Mammary epithelial cell (primary cell): ENCODE measurements at regions of chr7 and their contacts with region 1.

Region 1: DNA sequence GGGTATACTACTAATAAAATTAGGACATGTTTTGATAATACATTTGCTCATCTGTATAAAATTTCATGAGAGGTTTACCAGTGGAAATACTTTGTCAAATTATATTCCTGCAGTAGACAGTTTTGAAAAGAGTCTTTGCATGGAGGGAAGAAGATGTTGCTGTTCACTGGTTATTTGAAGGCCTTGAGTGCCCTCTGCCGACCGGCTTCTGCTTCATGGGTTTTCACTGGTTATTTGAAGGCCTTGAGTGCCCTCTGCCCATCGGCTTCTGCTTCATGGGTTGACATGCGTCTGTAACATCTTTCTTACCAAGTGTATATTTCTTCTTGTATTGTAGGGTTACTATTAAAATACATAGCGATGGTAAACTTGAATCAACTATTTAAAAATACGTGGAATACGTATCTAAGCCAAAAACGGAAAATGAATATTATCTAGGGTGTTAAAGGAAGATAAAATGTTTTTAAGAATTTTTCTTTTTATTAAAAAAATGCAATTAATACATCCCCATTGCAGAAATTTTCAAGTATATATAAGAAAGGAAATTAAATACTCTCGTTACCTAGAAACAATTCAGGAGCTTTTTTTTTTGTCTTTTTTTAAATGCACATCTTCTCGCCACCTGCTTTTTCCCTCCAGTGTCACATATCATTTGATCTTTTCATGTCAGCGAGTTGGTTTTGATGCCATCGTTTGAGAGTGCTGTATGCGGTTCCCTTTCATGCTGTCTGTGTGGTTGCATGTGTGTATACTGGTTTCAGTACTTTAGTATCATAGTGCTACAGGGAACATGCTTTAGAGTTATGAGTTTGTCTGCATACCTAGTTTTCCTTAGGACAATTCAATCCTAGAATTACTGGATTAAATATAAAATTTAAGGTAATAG is 73.4 kb downstream of the SHH start:
- DNase-seq: peak; percentile 60
- H3K4me3 ChIP-seq: no peak overlapping the region
- H3K27ac ChIP-seq: no peak overlapping the region
- H3K4me1 ChIP-seq: peaks cover 10% of the 10 kb centered on the region
- H3K27me3 ChIP-seq: no peaks in the 10 kb centered on the region
- CTCF ChIP-seq: peak; percentile 57 to 70

Region 2: DNA sequence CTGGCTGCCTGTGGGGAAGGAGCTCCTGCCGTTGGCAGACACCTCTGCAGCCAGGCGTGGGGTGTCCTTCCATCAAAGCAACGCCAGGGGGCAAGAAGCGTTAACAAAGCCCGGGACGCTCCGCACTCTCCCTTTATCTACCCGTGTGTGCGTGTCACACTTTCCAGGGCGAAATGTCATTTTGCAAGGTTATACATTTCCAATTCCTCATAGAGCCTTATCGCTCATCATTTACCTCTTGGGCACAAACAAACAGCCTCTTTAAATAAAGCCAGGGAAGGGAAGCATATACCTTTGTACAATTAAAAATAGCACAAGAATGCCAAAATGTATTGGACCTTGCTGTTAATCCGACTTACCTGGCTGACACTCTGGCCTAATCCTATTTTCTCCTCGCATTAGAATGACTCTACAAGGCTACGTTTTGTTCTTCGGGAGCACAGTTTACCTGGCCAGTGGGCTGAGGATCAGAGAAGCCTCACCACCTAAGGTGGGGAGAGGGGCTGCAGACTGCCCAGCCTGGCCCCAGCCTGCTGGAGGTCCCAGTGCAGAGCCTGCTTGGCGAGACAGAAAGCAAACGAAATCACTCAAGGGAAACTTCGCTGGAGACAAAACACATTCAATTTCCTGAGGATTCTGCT is 358.6 kb before region 1 on chr7:
- CTCF ChIA-PET with region 1: interaction called, 5 read pairs
- dilution Hi-C with region 1: no loop called
- in situ Hi-C with region 1: no loop called
- intact Hi-C with region 1: loop called (anchors 1 kb)
- DNase-seq: peak; percentile 59
- H3K4me3 ChIP-seq: no peak overlapping the region
- H3K27ac ChIP-seq: no peak overlapping the region
- H3K4me1 ChIP-seq: peaks cover 18% of the 10 kb centered on the region
- H3K27me3 ChIP-seq: peaks cover 72% of the 10 kb centered on the region
- CTCF ChIP-seq: peak; percentile 85 to 93

Region 3: DNA sequence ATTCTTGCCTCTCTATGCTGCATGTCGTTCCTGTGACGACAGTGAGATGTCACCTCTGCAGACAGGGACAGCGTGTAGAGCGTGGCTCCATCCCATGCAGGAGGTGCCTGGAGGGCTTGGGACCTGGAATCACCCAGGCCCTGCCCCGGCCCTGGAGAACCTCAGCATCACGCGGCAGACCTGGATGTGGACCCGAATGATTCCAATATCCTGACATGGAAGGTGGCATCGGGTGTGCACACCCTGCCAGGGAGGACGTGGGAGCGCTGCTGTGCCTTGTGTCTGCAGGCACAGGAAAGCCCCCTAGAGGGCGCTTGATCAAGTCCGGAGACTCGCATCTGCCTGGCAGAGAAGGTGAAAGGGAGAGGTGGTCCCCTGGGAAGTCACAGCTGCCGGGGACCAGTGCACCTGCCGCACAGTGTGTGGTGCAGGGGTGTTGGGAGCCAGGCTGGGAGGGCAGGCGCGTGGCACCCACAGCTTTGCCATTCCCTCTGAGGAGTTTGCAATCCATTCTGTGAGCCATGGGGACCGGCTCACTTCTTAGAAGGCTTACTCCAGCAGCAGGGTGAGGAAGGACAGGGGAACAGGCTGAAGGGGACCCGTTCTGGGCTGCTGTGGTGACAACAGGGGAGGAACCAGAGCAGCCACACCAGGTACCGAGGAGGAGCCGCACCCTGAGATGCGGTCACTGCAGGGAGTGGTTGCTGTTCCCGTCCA is 326.2 kb before region 1 on chr7:
- CTCF ChIA-PET with region 1: no interaction called
- dilution Hi-C with region 1: no loop called
- in situ Hi-C with region 1: no loop called
- intact Hi-C with region 1: loop called (anchors 2 kb)
- DNase-seq: peak; percentile 19
- H3K4me3 ChIP-seq: no peak overlapping the region
- H3K27ac ChIP-seq: no peak overlapping the region
- H3K4me1 ChIP-seq: no peaks in the 10 kb centered on the region
- H3K27me3 ChIP-seq: peaks cover 10% of the 10 kb centered on the region
- CTCF ChIP-seq: peak; percentile 46 to 62

Region 4: GRCh38 chr7:155533827-155534690 is 204.8 kb before region 1 on chr7:
- CTCF ChIA-PET with region 1: no interaction called
- dilution Hi-C with region 1: no loop called
- in situ Hi-C with region 1: no loop called
- intact Hi-C with region 1: loop called (anchors 5 kb)
- DNase-seq: no peak
- H3K4me3 ChIP-seq: no peak overlapping the region
- H3K27ac ChIP-seq: no peak overlapping the region
- H3K4me1 ChIP-seq: peaks cover 3% of the 10 kb centered on the region
- H3K27me3 ChIP-seq: peaks cover 41% of the 10 kb centered on the region
- CTCF ChIP-seq: peak; percentile 21 to 54

Region 5: DNA sequence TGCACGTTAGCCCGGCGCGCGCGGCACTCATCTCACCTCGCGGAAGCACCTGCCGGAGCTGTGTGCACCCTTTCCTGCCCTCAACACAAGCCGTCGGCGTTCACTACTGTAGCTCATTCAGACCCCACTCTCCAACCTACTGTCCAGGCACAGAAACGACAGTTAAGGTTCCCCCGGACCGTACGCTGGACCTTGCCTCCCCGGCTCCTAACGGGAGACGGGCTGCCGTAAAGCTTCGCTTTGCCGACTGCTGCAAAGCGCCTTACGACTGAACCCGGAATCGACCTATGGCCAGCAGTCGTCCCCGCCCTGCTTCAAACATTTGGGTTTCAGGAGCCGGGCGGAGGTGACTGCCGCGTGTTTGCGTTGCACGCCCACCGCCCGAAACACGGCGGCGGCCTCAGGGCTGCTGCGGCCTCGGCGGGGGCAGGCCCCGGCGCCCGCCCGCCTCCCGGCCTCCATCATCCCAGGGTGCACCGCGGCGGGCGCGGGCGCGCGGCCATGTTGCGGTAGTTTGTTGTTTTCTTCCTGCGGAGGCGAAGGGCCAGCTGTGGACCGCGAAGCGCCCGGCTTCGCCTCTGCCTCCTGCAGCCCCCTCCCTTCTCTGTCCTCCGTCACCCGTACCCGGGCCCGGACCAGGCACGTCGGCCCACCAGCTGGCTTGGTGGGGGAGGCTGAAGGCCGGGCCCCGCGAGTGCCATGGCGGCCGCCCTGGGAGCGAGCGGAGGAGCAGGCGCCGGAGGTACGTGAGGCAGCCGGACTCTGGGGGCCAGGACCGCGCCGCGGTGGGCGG is 94.5 kb before region 1 on chr7 and contains the start of gene RBM33:
- CTCF ChIA-PET with region 1: no interaction called
- dilution Hi-C with region 1: no loop called
- in situ Hi-C with region 1: no loop called
- intact Hi-C with region 1: loop called (anchors 2 kb)
- DNase-seq: peak; percentile 87
- H3K4me3 ChIP-seq: peak within 1 kb of the TSS; percentile 94 to 96 (median 95)
- H3K27ac ChIP-seq: peak within 1 kb of the TSS; percentile 79
- H3K4me1 ChIP-seq: peaks cover 9% of the 10 kb centered on the region
- H3K27me3 ChIP-seq: no peaks in the 10 kb centered on the region
- CTCF ChIP-seq: no peak
- total RNA-seq, gene RBM33: 22.2 to 54.3 TPM

Region 6: GRCh38 chr7:155752756-155753445 is 14.0 kb after region 1 on chr7:
- CTCF ChIA-PET with region 1: no interaction called
- dilution Hi-C with region 1: no loop called
- in situ Hi-C with region 1: no loop called
- intact Hi-C with region 1: no loop called
- DNase-seq: no peak
- H3K4me3 ChIP-seq: no peak overlapping the region
- H3K27ac ChIP-seq: no peak overlapping the region
- H3K4me1 ChIP-seq: peaks cover 10% of the 10 kb centered on the region
- H3K27me3 ChIP-seq: no peaks in the 10 kb centered on the region
- CTCF ChIP-seq: no peak